ENCODE measurements at regions of chrX and their contacts with region 1.

Region 1: GRCh38 chrX:136496770-136497598 is at the start of gene HTATSF1:
- DNase-seq: peak; percentile 88 to 94 (median 91)
- H3K4me3 ChIP-seq: peak within 1 kb of the TSS; percentile 83
- H3K4me3 Mint-ChIP-seq: peak within 1 kb of the TSS; percentile 88 to 95 (median 91)
- H3K27ac ChIP-seq: peak within 1 kb of the TSS; percentile 73
- H3K27ac Mint-ChIP-seq: peak within 1 kb of the TSS; percentile 93 to 99 (median 98)
- H3K4me1 ChIP-seq: peaks cover 23% of the 10 kb centered on the region
- H3K4me1 Mint-ChIP-seq: peaks cover 6 to 31% (median 17%) of the 10 kb centered on the region in 4 donors
- H3K27me3 ChIP-seq: no peaks in the 10 kb centered on the region
- H3K27me3 Mint-ChIP-seq: peaks cover 0 to 1% of the 10 kb centered on the region in 2 donors
- total RNA-seq, gene HTATSF1: 31.6 to 34.7 TPM

Region 2: DNA sequence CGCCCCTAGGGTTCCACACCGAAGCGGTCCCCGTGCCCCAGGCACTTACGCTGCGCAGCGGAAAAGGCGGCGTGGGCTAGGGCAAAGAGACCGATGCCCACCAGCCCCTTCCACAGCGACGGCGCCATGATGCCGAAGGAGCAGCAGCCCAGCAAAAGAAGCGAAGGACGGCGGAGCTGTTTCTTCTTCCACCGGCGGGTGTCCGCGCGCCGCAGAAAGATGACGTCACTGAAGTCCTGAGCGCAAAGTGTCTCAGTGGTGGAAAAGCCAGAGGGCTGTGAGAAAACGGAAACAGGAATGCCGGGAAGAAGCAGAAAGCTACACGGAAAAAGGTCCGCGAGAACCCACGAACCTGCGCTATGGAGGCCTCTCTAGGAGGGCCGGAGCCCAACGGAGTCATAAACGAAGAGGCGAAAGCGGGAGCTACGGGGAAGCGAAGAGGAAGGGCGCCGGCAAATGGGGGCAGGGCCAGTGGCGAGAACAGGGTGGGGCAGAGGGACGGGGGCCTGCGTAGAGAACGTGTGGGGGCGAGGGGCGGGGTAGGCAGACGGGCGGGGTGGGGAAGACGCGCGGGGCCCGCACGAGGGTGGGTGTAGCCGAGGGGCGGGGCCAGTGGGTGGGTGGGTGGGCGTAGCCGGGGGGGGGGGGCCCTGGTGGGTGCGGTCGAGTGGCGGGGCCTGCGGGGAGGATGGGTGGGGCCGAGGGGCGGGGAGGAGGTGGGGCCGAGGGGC is 523.3 kb before region 1 on chrX and contains the start of gene MMGT1:
- CTCF ChIA-PET with region 1: no interaction called
- POLR2A ChIA-PET with region 1: interaction called, 3 read pairs
- intact Hi-C with region 1: loop called (anchors 2 kb)
- DNase-seq: peak; percentile 80 to 87 (median 85)
- H3K4me3 ChIP-seq: peak within 1 kb of the TSS; percentile 70 to 73
- H3K4me3 Mint-ChIP-seq: peak within 1 kb of the TSS; percentile 87 to 99 (median 96)
- H3K27ac ChIP-seq: peak within 1 kb of the TSS; percentile 92
- H3K27ac Mint-ChIP-seq: peak within 1 kb of the TSS; percentile 98 to 99 (median 99)
- H3K4me1 ChIP-seq: peaks cover 27% of the 10 kb centered on the region
- H3K4me1 Mint-ChIP-seq: peaks cover 18 to 52% (median 33%) of the 10 kb centered on the region in 4 donors
- H3K27me3 ChIP-seq: no peaks in the 10 kb centered on the region
- H3K27me3 Mint-ChIP-seq: no peaks in the 10 kb centered on the region
- total RNA-seq, gene MMGT1: 28.5 to 29.0 TPM

Region 3: GRCh38 chrX:135985141-135985972 is 511.6 kb before region 1 on chrX and contains the start of gene SLC9A6:
- CTCF ChIA-PET with region 1: no interaction called
- POLR2A ChIA-PET with region 1: no interaction called
- intact Hi-C with region 1: loop called (anchors 5 kb)
- DNase-seq: peak; percentile 56 to 74 (median 64)
- H3K4me3 ChIP-seq: peak within 1 kb of the TSS; percentile 47 to 80
- H3K4me3 Mint-ChIP-seq: peak within 1 kb of the TSS; percentile 89 to 98 (median 92)
- H3K27ac ChIP-seq: peak within 1 kb of the TSS; percentile 67
- H3K27ac Mint-ChIP-seq: peak within 1 kb of the TSS; percentile 89 to 93 (median 92)
- H3K4me1 ChIP-seq: peaks cover 49% of the 10 kb centered on the region
- H3K4me1 Mint-ChIP-seq: peaks cover 30 to 85% (median 52%) of the 10 kb centered on the region in 4 donors
- H3K27me3 ChIP-seq: no peaks in the 10 kb centered on the region
- H3K27me3 Mint-ChIP-seq: no peaks in the 10 kb centered on the region
- total RNA-seq, gene SLC9A6: 20.5 to 24.3 TPM

Region 4: GRCh38 chrX:136065044-136065671 is 431.8 kb before region 1 on chrX:
- CTCF ChIA-PET with region 1: no interaction called
- POLR2A ChIA-PET with region 1: no interaction called
- intact Hi-C with region 1: no loop called
- DNase-seq: peak; percentile 43 to 67 (median 64)
- H3K4me3 ChIP-seq: no peak overlapping the region
- H3K4me3 Mint-ChIP-seq: peak overlapping the region in 7 of 8 donors; percentile 28 to 69 (median 48)
- H3K27ac ChIP-seq: no peak overlapping the region
- H3K27ac Mint-ChIP-seq: peak overlapping the region; percentile 82 to 94 (median 89)
- H3K4me1 ChIP-seq: peaks cover 18% of the 10 kb centered on the region
- H3K4me1 Mint-ChIP-seq: peaks cover 13 to 26% (median 20%) of the 10 kb centered on the region in 4 donors
- H3K27me3 ChIP-seq: no peaks in the 10 kb centered on the region
- H3K27me3 Mint-ChIP-seq: no peaks in the 10 kb centered on the region

Region 5: DNA sequence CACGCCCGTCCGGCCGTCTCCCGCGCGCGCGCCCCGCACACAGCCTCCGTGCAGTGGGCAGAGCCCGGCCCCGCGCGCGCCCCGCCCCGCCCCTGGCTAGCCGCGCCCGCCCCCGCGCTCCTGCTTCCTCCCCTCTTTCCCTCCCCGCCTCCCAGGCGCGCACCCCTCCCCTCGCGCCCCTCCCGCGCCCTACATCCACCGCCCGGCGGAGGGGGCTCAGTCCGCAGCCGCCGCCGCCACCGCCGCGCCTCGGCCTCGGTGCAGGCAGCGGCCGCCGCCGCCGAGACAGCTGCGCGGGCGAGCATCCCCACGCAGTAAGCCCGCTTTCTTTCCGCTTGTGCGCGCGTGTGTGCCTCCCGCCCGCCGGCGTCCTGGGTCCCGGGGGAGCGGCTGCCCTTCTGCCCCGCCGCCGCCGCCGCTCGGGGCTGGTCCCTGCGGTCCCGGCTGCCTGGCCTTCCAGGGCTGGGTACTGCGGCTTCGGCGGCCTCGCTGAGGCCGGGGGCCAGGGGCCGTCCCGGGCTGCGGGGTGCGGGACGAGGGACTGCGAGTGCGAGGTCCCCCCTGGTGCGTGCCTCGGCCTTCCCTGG is 349.6 kb before region 1 on chrX and contains the start of gene FHL1:
- CTCF ChIA-PET with region 1: no interaction called
- POLR2A ChIA-PET with region 1: no interaction called
- intact Hi-C with region 1: loop called (anchors 5 kb)
- DNase-seq: peak; percentile 50 to 62 (median 57)
- H3K4me3 ChIP-seq: peak within 1 kb of the TSS; percentile 52 to 65
- H3K4me3 Mint-ChIP-seq: peak within 1 kb of the TSS; percentile 87 to 93 (median 90)
- H3K27ac ChIP-seq: peak within 1 kb of the TSS; percentile 62
- H3K27ac Mint-ChIP-seq: peak within 1 kb of the TSS; percentile 81 to 96 (median 91)
- H3K4me1 ChIP-seq: peaks cover 33% of the 10 kb centered on the region
- H3K4me1 Mint-ChIP-seq: peaks cover 22 to 61% (median 45%) of the 10 kb centered on the region in 4 donors
- H3K27me3 ChIP-seq: no peaks in the 10 kb centered on the region
- H3K27me3 Mint-ChIP-seq: no peaks in the 10 kb centered on the region
- total RNA-seq, gene FHL1: 32.3 to 32.8 TPM

Region 6: DNA sequence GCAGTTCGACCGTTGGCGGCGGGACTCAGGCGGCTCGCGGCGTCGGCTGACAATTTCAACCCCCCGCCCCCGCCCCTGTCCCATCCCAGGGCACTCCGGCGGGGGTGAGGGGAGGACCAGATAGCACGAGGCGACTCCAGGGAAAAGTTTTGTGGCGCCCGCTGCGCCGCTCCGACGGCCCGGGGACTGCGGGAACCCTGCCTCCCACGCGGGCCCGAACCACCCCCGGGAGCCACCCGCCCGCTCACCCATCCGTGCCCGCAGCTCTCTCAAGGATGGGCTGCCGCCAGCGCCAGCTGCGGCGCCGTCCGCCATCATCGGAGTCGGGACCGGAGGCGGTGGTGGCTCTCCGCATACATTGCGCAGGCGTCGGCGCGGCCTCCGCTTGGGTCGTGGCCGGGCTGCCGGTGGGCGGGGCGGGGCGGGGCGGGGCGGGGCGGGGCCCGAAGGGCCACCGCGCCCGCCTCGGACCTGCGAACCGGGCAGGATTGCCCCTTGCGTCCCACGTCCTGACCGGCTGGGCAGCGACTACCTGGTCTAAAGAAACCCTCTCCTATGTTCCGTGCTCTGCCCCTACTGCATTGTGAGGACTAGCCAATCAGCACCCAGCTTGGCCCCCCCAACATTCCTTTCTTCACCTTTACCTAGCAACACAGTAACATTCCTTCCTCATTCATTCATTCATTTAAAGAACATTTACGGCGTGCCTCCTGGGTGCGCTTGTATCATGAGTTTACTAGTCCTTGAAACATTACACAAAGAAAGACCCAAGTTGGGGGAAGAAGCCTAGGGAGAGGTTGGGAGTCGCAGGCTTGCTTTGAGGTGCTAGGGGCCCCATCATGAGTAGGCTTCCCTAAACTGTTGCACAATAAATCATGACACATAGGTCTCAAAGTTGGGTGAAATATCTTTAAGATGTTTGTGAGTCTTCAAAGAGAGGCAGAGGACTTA is 245.7 kb before region 1 on chrX and contains the start of gene MAP7D3:
- CTCF ChIA-PET with region 1: no interaction called
- POLR2A ChIA-PET with region 1: no interaction called
- intact Hi-C with region 1: loop called (anchors 5 kb)
- DNase-seq: peak; percentile 67 to 75 (median 73)
- H3K4me3 ChIP-seq: peak within 1 kb of the TSS; percentile 23 to 60
- H3K4me3 Mint-ChIP-seq: peak within 1 kb of the TSS; percentile 86 to 94 (median 88)
- H3K27ac ChIP-seq: peak within 1 kb of the TSS; percentile 46
- H3K27ac Mint-ChIP-seq: peak within 1 kb of the TSS; percentile 78 to 97 (median 88)
- H3K4me1 ChIP-seq: peaks cover 14% of the 10 kb centered on the region
- H3K4me1 Mint-ChIP-seq: peaks cover 2 to 12% (median 5%) of the 10 kb centered on the region in 4 donors
- H3K27me3 ChIP-seq: no peaks in the 10 kb centered on the region
- H3K27me3 Mint-ChIP-seq: no peaks in the 10 kb centered on the region
- total RNA-seq, gene MAP7D3: 8.5 to 10.1 TPM

Region 7: GRCh38 chrX:136577552-136577951 is 80.6 kb after region 1 on chrX:
- CTCF ChIA-PET with region 1: interaction called, 3 read pairs
- POLR2A ChIA-PET with region 1: interaction called, 4 read pairs
- intact Hi-C with region 1: loop called (anchors 1 kb)
- DNase-seq: peak; percentile 67 to 77 (median 72)
- H3K4me3 ChIP-seq: no peak overlapping the region
- H3K4me3 Mint-ChIP-seq: peak overlapping the region in 5 of 8 donors; percentile 31 to 58 (median 44)
- H3K27ac ChIP-seq: peak overlapping the region; percentile 38
- H3K27ac Mint-ChIP-seq: peak overlapping the region; percentile 59 to 93 (median 89)
- H3K4me1 ChIP-seq: peaks cover 25% of the 10 kb centered on the region
- H3K4me1 Mint-ChIP-seq: peaks cover 10 to 33% (median 17%) of the 10 kb centered on the region in 4 donors
- H3K27me3 ChIP-seq: no peaks in the 10 kb centered on the region
- H3K27me3 Mint-ChIP-seq: no peaks in the 10 kb centered on the region

Region 8: GRCh38 chrX:136652822-136653723 is 156.1 kb after region 1 on chrX:
- CTCF ChIA-PET with region 1: no interaction called
- POLR2A ChIA-PET with region 1: no interaction called
- intact Hi-C with region 1: no loop called
- DNase-seq: peak in 1 of 5 donors; percentile 62
- H3K4me3 ChIP-seq: peak overlapping the region; percentile 84
- H3K4me3 Mint-ChIP-seq: peak overlapping the region; percentile 89 to 99 (median 97)
- H3K27ac ChIP-seq: peak overlapping the region; percentile 82
- H3K27ac Mint-ChIP-seq: peak overlapping the region; percentile 66 to 95 (median 90)
- H3K4me1 ChIP-seq: peaks cover 55% of the 10 kb centered on the region
- H3K4me1 Mint-ChIP-seq: peaks cover 27 to 70% (median 38%) of the 10 kb centered on the region in 4 donors
- H3K27me3 ChIP-seq: no peaks in the 10 kb centered on the region
- H3K27me3 Mint-ChIP-seq: no peaks in the 10 kb centered on the region

Region 9: GRCh38 chrX:136920001-136920400 is 423.0 kb after region 1 on chrX:
- CTCF ChIA-PET with region 1: interaction called, 3 read pairs
- POLR2A ChIA-PET with region 1: no interaction called
- intact Hi-C with region 1: loop called (anchors 10 kb)
- DNase-seq: no peak
- H3K4me3 ChIP-seq: no peak overlapping the region
- H3K4me3 Mint-ChIP-seq: no peak overlapping the region
- H3K27ac ChIP-seq: no peak overlapping the region
- H3K27ac Mint-ChIP-seq: no peak overlapping the region
- H3K4me1 ChIP-seq: peaks cover 3% of the 10 kb centered on the region
- H3K4me1 Mint-ChIP-seq: peaks cover 1 to 3% (median 2%) of the 10 kb centered on the region in 4 donors
- H3K27me3 ChIP-seq: no peaks in the 10 kb centered on the region
- H3K27me3 Mint-ChIP-seq: no peaks in the 10 kb centered on the region